Activated CD4-positive, alpha-beta memory T cell treated with anti-CD3 and anti-CD28 coated beads, Interleukin-2, amount 10 ng/mL, durations not matched to agents 7 days and 5 days (primary cell): ENCODE measurements at regions of chr16 and their contacts with region 1.

Region 1: GRCh38 chr16:11255737-11256660 is at the start of gene SOCS1:
- DNase-seq: peak; percentile 92
- H3K4me3 Mint-ChIP-seq: peak within 1 kb of the TSS; percentile 94
- H3K27ac Mint-ChIP-seq: peak within 1 kb of the TSS; percentile 94
- H3K4me1 Mint-ChIP-seq: peaks cover 51% of the 10 kb centered on the region
- H3K27me3 Mint-ChIP-seq: peaks cover 12% of the 10 kb centered on the region
- total RNA-seq, gene SOCS1: 136 to 142 TPM

Region 2: GRCh38 chr16:10964039-10964890 is 291.7 kb before region 1 on chr16:
- CTCF ChIA-PET with region 1: interaction called, 233 read pairs
- POLR2A ChIA-PET with region 1: interaction called, 309 read pairs
- DNase-seq: peak; percentile 87
- H3K4me3 Mint-ChIP-seq: peak overlapping the region; percentile 57
- H3K27ac Mint-ChIP-seq: peak overlapping the region; percentile 95
- H3K4me1 Mint-ChIP-seq: peaks cover 82% of the 10 kb centered on the region
- H3K27me3 Mint-ChIP-seq: no peaks in the 10 kb centered on the region

Region 3: GRCh38 chr16:11076259-11077018 is 179.6 kb before region 1 on chr16:
- CTCF ChIA-PET with region 1: no interaction called
- POLR2A ChIA-PET with region 1: interaction called, 31 read pairs
- DNase-seq: peak; percentile 72
- H3K4me3 Mint-ChIP-seq: no peak overlapping the region
- H3K27ac Mint-ChIP-seq: peak overlapping the region; percentile 79
- H3K4me1 Mint-ChIP-seq: peaks cover 95% of the 10 kb centered on the region
- H3K27me3 Mint-ChIP-seq: no peaks in the 10 kb centered on the region

Region 4: DNA sequence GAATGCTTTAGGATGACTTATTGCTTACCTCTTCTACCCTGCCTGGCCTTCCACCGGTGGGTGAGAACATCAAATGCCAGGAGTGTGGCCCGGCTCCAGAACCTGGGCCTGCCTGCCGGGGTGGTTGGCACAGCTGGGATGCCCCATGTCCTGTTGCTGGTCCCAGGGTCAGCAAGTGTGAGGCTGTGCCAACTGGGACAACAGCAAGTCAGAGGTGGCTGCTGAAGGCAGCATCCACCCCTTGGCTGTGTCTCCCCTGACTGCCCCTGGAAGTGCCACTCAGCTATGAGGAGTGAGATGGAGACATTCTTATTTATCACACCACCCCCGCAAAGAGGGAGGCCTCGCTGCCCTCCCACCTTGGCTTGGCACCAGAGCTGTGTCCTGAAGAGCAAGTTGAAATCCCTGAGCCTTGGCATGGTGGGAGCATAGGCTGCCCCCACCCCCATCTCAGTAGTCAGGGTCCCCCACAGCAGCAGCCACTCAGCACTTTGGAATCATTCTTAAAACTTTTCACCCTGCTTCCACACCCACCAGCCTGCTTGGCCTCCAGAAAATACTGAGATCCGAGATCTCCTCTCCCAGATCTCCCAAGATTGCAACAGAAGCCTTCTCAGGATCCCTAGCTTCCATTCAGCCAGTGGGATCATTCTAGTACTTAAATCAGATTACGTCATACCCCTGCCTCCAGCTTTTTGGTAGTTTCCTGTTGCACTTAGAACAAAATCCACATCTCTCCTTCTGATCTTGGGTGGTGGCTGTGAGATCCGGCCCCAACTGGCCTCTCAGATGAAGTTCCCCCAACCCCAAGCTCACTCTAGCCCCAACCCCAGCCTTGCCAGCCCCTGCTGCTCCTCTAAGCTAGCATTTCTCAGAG is 127.5 kb before region 1 on chr16:
- CTCF ChIA-PET with region 1: interaction called, 4 read pairs
- POLR2A ChIA-PET with region 1: interaction called, 12 read pairs
- DNase-seq: peak; percentile 55
- H3K4me3 Mint-ChIP-seq: no peak overlapping the region
- H3K27ac Mint-ChIP-seq: peak overlapping the region; percentile 82
- H3K4me1 Mint-ChIP-seq: peaks cover 58% of the 10 kb centered on the region
- H3K27me3 Mint-ChIP-seq: no peaks in the 10 kb centered on the region

Region 5: GRCh38 chr16:11224096-11224893 is 31.7 kb before region 1 on chr16:
- CTCF ChIA-PET with region 1: interaction called, 16 read pairs
- POLR2A ChIA-PET with region 1: interaction called, 302 read pairs
- DNase-seq: peak; percentile 85
- H3K4me3 Mint-ChIP-seq: peak overlapping the region; percentile 68
- H3K27ac Mint-ChIP-seq: peak overlapping the region; percentile 99
- H3K4me1 Mint-ChIP-seq: peaks cover 67% of the 10 kb centered on the region
- H3K27me3 Mint-ChIP-seq: no peaks in the 10 kb centered on the region

Region 6: DNA sequence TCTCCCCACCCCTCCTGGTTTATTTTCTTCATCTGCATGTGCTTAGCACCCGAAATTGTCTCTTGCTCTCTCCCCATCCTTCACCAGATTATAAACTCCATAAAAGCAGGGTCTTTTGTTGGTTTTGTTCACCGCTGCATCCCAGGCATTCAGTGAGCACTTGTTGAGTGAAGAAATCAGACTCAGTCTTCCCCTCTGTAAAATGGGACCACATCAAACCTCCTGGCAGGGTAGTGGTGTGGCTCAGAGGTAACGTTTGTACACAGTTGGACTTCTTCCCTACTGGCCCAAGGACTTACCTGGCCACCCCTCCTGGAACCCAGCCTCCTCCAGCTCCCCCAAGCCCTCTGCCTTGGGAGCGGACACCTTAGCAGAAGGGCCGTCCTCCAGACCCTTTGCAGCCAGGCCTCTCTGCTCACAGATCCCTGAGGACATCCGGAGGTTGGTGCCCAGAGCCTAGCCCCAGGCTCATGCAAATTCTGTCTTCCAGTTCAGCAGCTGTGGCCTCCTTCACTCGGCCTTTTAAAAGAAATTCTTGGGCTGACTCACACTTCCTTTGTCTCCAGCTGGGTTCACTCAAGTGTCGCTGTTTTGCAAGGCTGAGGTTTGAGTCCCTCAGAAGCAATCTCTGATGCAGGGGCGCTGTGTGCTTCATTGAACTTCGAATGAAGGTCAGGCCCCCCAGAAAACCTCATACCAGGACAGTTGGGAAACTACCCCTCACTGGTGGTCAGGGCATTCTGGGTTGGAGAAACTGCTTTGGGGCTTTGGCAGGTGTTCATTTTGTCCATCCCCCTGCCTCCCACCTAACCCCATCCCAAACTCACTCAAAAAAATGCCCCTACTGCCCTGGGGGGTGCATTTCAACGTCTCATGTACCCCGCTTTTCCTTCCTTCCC is 72.4 kb after region 1 on chr16:
- CTCF ChIA-PET with region 1: interaction called, 4 read pairs
- POLR2A ChIA-PET with region 1: interaction called, 10 read pairs
- DNase-seq: peak; percentile 71
- H3K4me3 Mint-ChIP-seq: peak overlapping the region; percentile 64
- H3K27ac Mint-ChIP-seq: peak overlapping the region; percentile 74
- H3K4me1 Mint-ChIP-seq: peaks cover 52% of the 10 kb centered on the region
- H3K27me3 Mint-ChIP-seq: peaks cover 12% of the 10 kb centered on the region

Region 7: GRCh38 chr16:11370084-11370931 is 114.3 kb after region 1 on chr16:
- CTCF ChIA-PET with region 1: interaction called, 19 read pairs
- POLR2A ChIA-PET with region 1: interaction called, 21 read pairs
- DNase-seq: no peak
- H3K4me3 Mint-ChIP-seq: no peak overlapping the region
- H3K27ac Mint-ChIP-seq: peak overlapping the region; percentile 9
- H3K4me1 Mint-ChIP-seq: peaks cover 8% of the 10 kb centered on the region
- H3K27me3 Mint-ChIP-seq: peaks cover 9% of the 10 kb centered on the region